OCI-LY7 (cell line): ENCODE measurements at regions of chr10 and their contacts with region 1.

Region 1: DNA sequence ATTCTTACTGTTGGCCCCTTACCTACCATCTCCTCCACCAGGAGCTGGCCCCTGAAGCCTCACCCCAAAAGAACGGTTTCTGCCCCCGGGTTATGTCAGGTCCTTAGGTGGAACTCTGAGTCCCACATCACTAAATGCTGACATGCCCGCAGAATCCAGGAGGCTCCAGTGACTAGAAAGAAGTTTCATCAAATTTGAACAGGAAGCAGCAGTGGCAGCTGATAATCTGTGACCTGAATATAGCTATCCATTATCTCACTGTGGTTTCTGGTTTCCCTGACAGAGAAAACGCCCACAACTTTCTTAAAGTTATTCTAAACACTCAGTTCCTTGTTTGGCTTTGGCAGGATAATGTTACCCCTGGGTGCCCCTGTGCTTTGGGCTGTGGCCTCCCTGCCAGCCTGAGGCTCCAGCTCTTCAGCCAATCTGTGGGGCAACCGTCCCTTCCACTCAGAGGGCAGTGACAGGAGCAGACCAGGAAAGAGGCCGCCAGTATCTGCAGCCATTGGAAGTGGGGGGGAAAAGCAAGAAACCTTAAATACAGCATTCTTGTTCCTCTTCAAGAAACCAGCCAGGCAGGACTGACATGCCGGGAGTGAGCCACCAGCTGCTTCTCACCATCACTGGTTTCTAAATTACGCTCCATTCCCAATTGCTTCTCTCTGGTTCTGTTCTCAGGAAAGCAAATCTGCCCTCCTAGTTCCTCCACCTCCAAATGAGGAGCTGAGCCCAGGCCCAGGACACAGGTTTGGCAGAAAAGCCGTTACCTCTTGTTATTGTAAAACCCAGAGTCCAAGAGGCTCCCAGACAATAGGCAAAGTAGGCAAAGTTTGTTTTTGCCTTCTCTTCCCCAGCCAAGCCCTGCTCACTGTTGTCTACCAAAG is 41.2 kb upstream of the VCL start:
- DNase-seq: peak; percentile 67
- H3K4me3 ChIP-seq: peak overlapping the region; percentile 45
- H3K27ac ChIP-seq: peak overlapping the region; percentile 57
- H3K4me1 ChIP-seq: peaks cover 49% of the 10 kb centered on the region
- CTCF ChIP-seq: no peak

Region 2: DNA sequence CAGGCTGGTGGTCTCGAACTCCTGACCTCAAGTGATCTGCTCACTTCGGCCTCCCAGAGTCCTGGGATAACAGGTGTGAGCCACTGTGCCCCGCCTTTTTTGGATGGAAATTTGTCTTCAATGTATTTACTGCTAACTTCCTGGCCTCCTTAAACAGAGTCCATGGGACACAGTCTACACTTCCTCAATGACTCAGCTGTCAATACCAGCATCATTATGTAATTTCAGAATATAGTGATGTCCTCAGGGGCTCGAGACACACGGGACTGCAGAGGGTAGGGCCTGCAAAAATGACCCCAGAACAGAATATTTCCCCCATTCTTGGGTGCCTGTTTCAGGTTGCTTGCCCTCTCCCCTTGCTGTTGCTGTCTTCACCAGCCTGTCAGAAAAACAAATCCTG is 113.4 kb before region 1 on chr10:
- CTCF ChIA-PET with region 1: no interaction called
- POLR2A ChIA-PET with region 1: no interaction called
- intact Hi-C with region 1: loop called (anchors 5 kb)
- DNase-seq: no peak
- H3K4me3 ChIP-seq: no peak overlapping the region
- H3K27ac ChIP-seq: no peak overlapping the region
- H3K4me1 ChIP-seq: no peaks in the 10 kb centered on the region
- CTCF ChIP-seq: no peak

Region 3: GRCh38 chr10:73997787-73998622 is 41.3 kb after region 1 on chr10 and contains the start of gene VCL:
- CTCF ChIA-PET with region 1: interaction called, 4 read pairs
- POLR2A ChIA-PET with region 1: interaction called, 8 read pairs
- intact Hi-C with region 1: loop called (anchors 2 kb)
- DNase-seq: peak; percentile 95
- H3K4me3 ChIP-seq: peak within 1 kb of the TSS; percentile 93
- H3K27ac ChIP-seq: peak within 1 kb of the TSS; percentile 56
- H3K4me1 ChIP-seq: peaks cover 34% of the 10 kb centered on the region
- CTCF ChIP-seq: no peak
- total RNA-seq, gene VCL: 19.1 and 24.9 TPM in 2 replicates

Region 4: DNA sequence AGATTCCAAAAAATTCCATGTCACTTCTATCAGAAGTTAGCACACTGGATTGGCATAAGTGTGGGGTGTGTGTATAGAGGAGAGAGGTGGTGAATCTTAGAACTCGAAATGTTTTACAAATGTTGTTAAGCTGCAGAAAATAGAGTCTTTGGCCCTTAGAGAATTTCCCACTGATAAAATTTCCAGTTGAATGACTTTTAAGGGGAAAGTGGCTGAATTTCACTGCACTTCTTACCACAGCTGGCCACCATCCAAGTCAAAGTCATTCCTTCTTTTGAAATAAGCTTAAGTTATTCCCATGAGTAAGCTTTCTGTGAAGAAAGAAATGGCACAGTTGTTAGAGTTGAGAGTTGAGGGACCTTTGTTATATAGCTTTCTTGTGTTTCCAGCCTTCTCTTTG is 55.1 kb after region 1 on chr10:
- CTCF ChIA-PET with region 1: interaction called, 3 read pairs
- POLR2A ChIA-PET with region 1: interaction called, 7 read pairs
- intact Hi-C with region 1: loop called (anchors 2 kb)
- DNase-seq: no peak
- H3K4me3 ChIP-seq: peak overlapping the region; percentile 50
- H3K27ac ChIP-seq: peak overlapping the region; percentile 95
- H3K4me1 ChIP-seq: peaks cover 83% of the 10 kb centered on the region
- CTCF ChIP-seq: no peak

Region 5: GRCh38 chr10:74035303-74035702 is 78.6 kb after region 1 on chr10:
- CTCF ChIA-PET with region 1: no interaction called
- POLR2A ChIA-PET with region 1: no interaction called
- intact Hi-C with region 1: loop called (anchors 5 kb)
- DNase-seq: peak; percentile 38
- H3K4me3 ChIP-seq: no peak overlapping the region
- H3K27ac ChIP-seq: no peak overlapping the region
- H3K4me1 ChIP-seq: peaks cover 10% of the 10 kb centered on the region
- CTCF ChIP-seq: peak; percentile 79

Region 6: GRCh38 chr10:74058658-74059057 is 101.9 kb after region 1 on chr10:
- CTCF ChIA-PET with region 1: no interaction called
- POLR2A ChIA-PET with region 1: interaction called, 4 read pairs
- intact Hi-C with region 1: loop called (anchors 1 kb)
- DNase-seq: peak; percentile 73
- H3K4me3 ChIP-seq: no peak overlapping the region
- H3K27ac ChIP-seq: no peak overlapping the region
- H3K4me1 ChIP-seq: peaks cover 14% of the 10 kb centered on the region
- CTCF ChIP-seq: peak; percentile 73

Region 7: GRCh38 chr10:74081192-74081803 is 124.6 kb after region 1 on chr10:
- CTCF ChIA-PET with region 1: no interaction called
- POLR2A ChIA-PET with region 1: no interaction called
- intact Hi-C with region 1: loop called (anchors 2 kb)
- DNase-seq: peak; percentile 68
- H3K4me3 ChIP-seq: no peak overlapping the region
- H3K27ac ChIP-seq: no peak overlapping the region
- H3K4me1 ChIP-seq: peaks cover 44% of the 10 kb centered on the region
- CTCF ChIP-seq: peak; percentile 90